ENCODE measurements at regions of chr7 and their contacts with region 1.

Region 1: GRCh38 chr7:99558306-99559174 is at the start of gene ZNF655:
- DNase-seq: peak; percentile 89
- H3K4me3 Mint-ChIP-seq: peak within 1 kb of the TSS; percentile 100
- H3K27ac Mint-ChIP-seq: peak within 1 kb of the TSS; percentile 98
- H3K4me1 Mint-ChIP-seq: peaks cover 48% of the 10 kb centered on the region
- H3K27me3 Mint-ChIP-seq: no peaks in the 10 kb centered on the region
- total RNA-seq, gene ZNF655: 77.9 and 79.9 TPM in 2 replicates

Region 2: GRCh38 chr7:99380032-99380822 is 178.3 kb before region 1 on chr7:
- intact Hi-C with region 1: loop called (anchors 2 kb)
- DNase-seq: peak; percentile 26
- H3K4me3 Mint-ChIP-seq: peak overlapping the region; percentile 86
- H3K27ac Mint-ChIP-seq: peak overlapping the region; percentile 91
- H3K4me1 Mint-ChIP-seq: peaks cover 34% of the 10 kb centered on the region
- H3K27me3 Mint-ChIP-seq: no peaks in the 10 kb centered on the region

Region 3: DNA sequence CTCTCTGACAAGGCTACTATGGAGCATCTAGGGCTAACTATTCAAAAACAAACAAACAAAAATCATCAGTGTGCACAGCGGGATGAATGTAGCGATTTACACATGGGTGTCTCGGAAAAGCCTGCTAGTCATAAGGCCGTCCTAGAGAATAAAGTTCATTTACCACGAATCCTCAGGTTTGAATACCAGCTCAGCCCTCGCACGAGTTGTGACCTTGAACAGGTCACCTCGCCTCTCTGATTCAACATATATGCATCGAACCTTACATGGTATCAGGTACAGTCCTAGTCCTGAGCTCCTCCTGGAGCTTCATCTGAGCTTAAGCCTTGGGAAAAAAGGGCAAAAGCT is 93.1 kb before region 1 on chr7:
- intact Hi-C with region 1: loop called (anchors 1 kb)
- DNase-seq: no peak
- H3K4me3 Mint-ChIP-seq: peak overlapping the region; percentile 91
- H3K27ac Mint-ChIP-seq: peak overlapping the region; percentile 73
- H3K4me1 Mint-ChIP-seq: peaks cover 27% of the 10 kb centered on the region
- H3K27me3 Mint-ChIP-seq: no peaks in the 10 kb centered on the region

Region 4: GRCh38 chr7:99472561-99473243 is 85.8 kb before region 1 on chr7 and contains the start of gene ZNF789:
- intact Hi-C with region 1: loop called (anchors 1 kb)
- DNase-seq: peak; percentile 96
- H3K4me3 Mint-ChIP-seq: peak within 1 kb of the TSS; percentile 99
- H3K27ac Mint-ChIP-seq: peak within 1 kb of the TSS; percentile 92
- H3K4me1 Mint-ChIP-seq: peaks cover 30% of the 10 kb centered on the region
- H3K27me3 Mint-ChIP-seq: peaks cover 1% of the 10 kb centered on the region
- total RNA-seq, gene ZNF789: 19.6 and 22.4 TPM in 2 replicates

Region 5: GRCh38 chr7:99616359-99617191 is 58.0 kb after region 1 on chr7 and contains the start of gene ZSCAN25:
- intact Hi-C with region 1: loop called (anchors 2 kb)
- DNase-seq: peak; percentile 79
- H3K4me3 Mint-ChIP-seq: peak within 1 kb of the TSS; percentile 96
- H3K27ac Mint-ChIP-seq: peak within 1 kb of the TSS; percentile 94
- H3K4me1 Mint-ChIP-seq: peaks cover 56% of the 10 kb centered on the region
- H3K27me3 Mint-ChIP-seq: peaks cover 4% of the 10 kb centered on the region
- total RNA-seq, gene ZSCAN25: 31.5 and 32.9 TPM in 2 replicates

Measured in activated T-helper 1 cell treated with anti-CD3 and anti-CD28 coated beads, Interleukin-12 subunit alpha, Interleukin-12 subunit beta, Interleukin-2, Interleukin-4 antibody, amounts not matched to agents 30 ng/mL and 10 ng/mL and 1 ng/mL, durations not matched to agents 14 hours and 24 hours and 36 hours (primary cell).